Activated T-helper 1 cell treated with anti-CD3 and anti-CD28 coated beads, Interleukin-12 subunit alpha, Interleukin-12 subunit beta, Interleukin-2, Interleukin-4 antibody, amounts not matched to agents 30 ng/mL and 10 ng/mL and 1 ng/mL, durations not matched to agents 14 hours and 24 hours and 36 hours (primary cell): ENCODE measurements at regions of chr1 and their contacts with region 1.

Region 1: DNA sequence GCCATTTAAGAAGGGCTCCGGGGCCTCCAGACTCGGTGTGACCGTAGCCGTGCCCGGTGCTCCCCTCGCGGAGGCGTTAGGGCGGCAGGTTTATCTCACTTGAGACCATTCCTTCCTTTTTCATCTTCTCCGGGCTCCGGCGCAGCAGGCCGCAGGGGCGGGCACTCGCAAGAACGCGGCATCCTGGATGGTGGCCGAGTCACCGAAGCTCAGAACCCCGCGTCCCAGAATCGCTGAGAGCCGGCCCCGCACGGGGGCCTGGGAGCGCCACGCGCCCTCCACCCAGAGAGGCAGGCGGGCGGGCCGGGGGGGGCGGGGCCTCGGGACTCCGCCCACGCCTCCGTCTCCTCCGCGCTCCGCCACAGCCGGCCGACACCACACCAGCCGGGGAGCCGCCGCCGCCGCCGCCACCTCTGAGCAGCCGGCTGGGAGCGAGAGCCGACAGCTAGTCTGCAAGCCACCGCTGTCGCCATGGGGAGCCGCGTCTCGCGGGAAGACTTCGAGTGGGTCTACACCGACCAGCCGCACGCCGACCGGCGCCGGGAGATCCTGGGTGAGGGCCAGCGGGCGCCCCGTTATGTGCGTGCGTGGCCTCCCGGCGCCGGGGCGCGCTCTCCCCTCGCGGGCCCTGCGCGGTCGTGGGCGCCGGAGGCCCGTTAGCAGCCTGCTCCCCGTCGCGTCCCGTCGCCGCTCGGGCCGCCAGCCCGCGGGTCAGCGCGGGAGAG is at the start of gene DEGS1:
- DNase-seq: peak; percentile 80
- H3K4me3 Mint-ChIP-seq: peak within 1 kb of the TSS; percentile 96
- H3K27ac Mint-ChIP-seq: peak within 1 kb of the TSS; percentile 93
- H3K4me1 Mint-ChIP-seq: peaks cover 46% of the 10 kb centered on the region
- H3K27me3 Mint-ChIP-seq: peaks cover 3% of the 10 kb centered on the region
- total RNA-seq, gene DEGS1: 54.7 and 57.1 TPM in 2 replicates

Region 2: DNA sequence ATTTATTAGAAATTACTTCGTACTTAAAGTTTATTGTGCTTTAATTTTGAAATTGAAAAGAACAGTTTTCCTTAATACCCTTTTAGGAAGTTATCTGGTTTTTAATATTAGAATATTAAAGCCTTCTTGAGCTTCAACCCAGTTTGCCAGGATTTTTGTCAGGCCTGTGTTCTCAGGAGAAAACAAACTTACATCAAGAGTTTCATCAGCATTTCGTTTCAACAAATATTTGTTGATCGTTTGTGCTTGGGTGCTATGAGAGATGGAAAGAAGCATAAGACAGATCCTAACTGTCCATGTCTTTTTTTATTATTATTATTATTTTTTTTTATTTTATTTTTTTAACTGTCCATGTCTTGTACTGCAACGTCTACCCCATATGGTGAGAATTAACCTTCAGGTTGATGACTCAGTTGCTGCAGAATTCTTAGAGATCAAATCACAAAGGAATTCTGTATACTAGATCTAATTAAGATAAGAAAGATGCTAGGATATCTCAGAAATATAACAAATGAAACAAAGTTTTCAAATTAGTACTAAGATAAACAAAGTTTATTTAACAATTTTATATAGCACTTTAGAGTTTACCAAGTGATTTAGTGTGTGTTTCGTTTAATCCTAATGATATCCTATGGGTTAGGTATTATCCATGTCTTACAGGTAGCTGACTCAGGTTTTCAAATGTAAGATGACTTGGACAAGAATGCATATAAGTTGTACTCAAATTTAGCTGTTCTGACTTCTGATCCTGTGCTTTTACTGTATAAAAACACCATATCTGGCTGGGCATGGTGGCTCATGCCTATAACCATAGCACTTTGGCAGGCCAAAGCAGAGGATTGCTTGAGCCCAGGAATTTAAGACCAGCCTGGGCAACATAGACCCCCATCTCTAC is 54.9 kb before region 1 on chr1:
- intact Hi-C with region 1: no loop called
- DNase-seq: no peak
- H3K4me3 Mint-ChIP-seq: no peak overlapping the region
- H3K27ac Mint-ChIP-seq: no peak overlapping the region
- H3K4me1 Mint-ChIP-seq: peaks cover 5% of the 10 kb centered on the region
- H3K27me3 Mint-ChIP-seq: no peaks in the 10 kb centered on the region

Region 3: GRCh38 chr1:224149713-224150112 is 33.3 kb before region 1 on chr1:
- intact Hi-C with region 1: no loop called
- DNase-seq: no peak
- H3K4me3 Mint-ChIP-seq: no peak overlapping the region
- H3K27ac Mint-ChIP-seq: no peak overlapping the region
- H3K4me1 Mint-ChIP-seq: peaks cover 11% of the 10 kb centered on the region
- H3K27me3 Mint-ChIP-seq: no peaks in the 10 kb centered on the region

Region 4: GRCh38 chr1:224203243-224204016 is 20.4 kb after region 1 on chr1:
- intact Hi-C with region 1: loop called (anchors 2 kb)
- DNase-seq: no peak
- H3K4me3 Mint-ChIP-seq: no peak overlapping the region
- H3K27ac Mint-ChIP-seq: no peak overlapping the region
- H3K4me1 Mint-ChIP-seq: peaks cover 15% of the 10 kb centered on the region
- H3K27me3 Mint-ChIP-seq: no peaks in the 10 kb centered on the region

Region 5: DNA sequence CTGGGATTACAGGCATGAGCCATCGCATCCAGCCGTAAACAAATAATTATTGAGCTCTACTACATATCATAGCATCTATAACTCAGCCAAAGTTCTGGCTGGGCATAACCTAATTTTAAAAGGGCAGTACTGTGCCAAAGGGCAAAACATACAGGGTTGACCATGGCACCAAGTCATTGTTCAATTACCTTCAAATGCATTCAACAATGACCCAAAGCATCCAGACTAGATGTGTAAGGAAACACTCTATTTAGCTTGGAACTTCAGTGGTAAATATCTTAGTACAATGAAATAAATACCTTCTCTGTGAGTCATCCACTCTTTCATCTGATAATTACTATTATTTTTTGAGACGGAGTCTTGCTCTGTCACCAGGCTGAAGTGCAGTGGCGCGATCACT is 76.9 kb after region 1 on chr1:
- intact Hi-C with region 1: loop called (anchors 5 kb)
- DNase-seq: no peak
- H3K4me3 Mint-ChIP-seq: no peak overlapping the region
- H3K27ac Mint-ChIP-seq: no peak overlapping the region
- H3K4me1 Mint-ChIP-seq: peaks cover 26% of the 10 kb centered on the region
- H3K27me3 Mint-ChIP-seq: no peaks in the 10 kb centered on the region

Region 6: DNA sequence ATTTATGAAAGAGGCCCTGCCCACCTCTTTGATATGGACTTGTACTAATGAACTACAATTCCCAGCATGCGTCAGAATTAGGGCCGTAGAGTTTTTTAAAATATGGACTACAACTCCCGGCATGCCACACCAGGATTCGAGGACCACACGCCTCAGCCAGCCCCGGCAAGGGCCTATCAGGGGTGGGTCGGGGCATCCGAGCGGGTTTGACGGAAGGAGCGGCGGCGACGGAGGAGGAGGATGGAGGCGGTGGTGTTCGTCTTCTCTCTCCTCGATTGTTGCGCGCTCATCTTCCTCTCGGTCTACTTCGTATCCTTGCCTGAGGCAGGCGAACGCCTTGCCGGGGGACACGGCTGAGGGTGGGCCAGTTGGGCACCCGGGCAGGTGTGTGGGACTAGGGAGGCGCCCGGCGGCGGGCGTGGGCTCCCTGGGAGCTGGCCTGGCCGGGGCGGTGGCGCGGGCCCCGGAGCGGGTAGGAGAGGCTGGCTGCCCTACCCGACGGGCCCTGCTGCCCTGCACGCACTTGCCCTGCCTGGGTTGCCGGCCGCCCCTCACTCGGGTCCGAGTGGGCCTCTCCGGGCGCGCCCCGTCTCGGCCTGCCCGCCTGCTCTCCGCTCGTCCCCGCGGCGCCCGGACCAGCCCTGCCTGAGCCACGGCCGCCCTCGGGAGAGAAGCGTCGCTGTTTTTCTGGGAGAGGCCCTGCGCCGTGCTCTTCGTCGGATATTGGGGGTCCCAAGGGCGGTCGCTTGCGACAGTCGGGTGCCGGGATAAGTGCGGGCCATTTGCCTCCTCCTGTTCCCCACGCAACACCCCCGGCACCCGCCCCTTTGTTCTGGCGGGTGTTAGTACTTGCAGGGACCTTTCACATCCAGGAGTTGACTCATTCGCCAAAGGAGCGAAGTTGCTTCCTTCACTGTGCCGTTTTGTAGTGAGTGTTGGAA is 173.9 kb after region 1 on chr1 and contains the start of gene CNIH4:
- intact Hi-C with region 1: loop called (anchors 1 kb)
- DNase-seq: peak; percentile 89
- H3K4me3 Mint-ChIP-seq: peak within 1 kb of the TSS; percentile 93
- H3K27ac Mint-ChIP-seq: peak within 1 kb of the TSS; percentile 93
- H3K4me1 Mint-ChIP-seq: peaks cover 28% of the 10 kb centered on the region
- H3K27me3 Mint-ChIP-seq: no peaks in the 10 kb centered on the region
- total RNA-seq, gene CNIH4: 80.7 and 82.3 TPM in 2 replicates

Region 7: DNA sequence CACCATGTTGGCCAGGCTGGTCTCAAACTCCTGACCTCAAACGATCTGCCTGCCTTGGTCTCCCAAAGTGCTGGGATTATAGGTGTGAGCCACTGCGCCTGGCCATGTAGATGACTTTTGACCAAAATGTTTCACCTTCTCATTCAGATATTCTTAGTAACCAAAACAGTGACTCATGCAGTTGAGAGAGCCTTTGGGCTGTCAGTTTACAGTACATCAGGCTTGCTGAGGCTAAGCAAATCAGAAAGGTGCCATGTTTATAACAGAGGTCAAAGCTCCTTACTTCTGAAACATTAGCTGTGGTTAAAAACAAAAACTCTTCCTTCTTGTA is 194.6 kb after region 1 on chr1:
- intact Hi-C with region 1: loop called (anchors 2 kb)
- DNase-seq: no peak
- H3K4me3 Mint-ChIP-seq: peak overlapping the region; percentile 66
- H3K27ac Mint-ChIP-seq: peak overlapping the region; percentile 94
- H3K4me1 Mint-ChIP-seq: peaks cover 91% of the 10 kb centered on the region
- H3K27me3 Mint-ChIP-seq: no peaks in the 10 kb centered on the region

Region 8: GRCh38 chr1:224454397-224455066 is 271.5 kb after region 1 on chr1:
- intact Hi-C with region 1: loop called (anchors 5 kb)
- DNase-seq: no peak
- H3K4me3 Mint-ChIP-seq: no peak overlapping the region
- H3K27ac Mint-ChIP-seq: no peak overlapping the region
- H3K4me1 Mint-ChIP-seq: peaks cover 31% of the 10 kb centered on the region
- H3K27me3 Mint-ChIP-seq: no peaks in the 10 kb centered on the region